HepG2 (cell line): ENCODE measurements at regions of chr5 and their contacts with region 1.

Region 1: GRCh38 chr5:55226027-55226933 is 835 bp downstream of the MCIDAS start:
- DNase-seq: peak; percentile 38
- ATAC-seq: peak; percentile 86
- H3K4me3 ChIP-seq: peak overlapping the region; percentile 39 to 74 (median 41); a peak in 4 of 6 replicates
- H3K27ac ChIP-seq: no peak overlapping the region
- H3K4me1 ChIP-seq: peaks cover 4% of the 10 kb centered on the region; the same call in 1 of the 2 replicates
- H3K27me3 ChIP-seq: peaks cover 1 to 60% of the 10 kb centered on the region in 2 experiments
- CTCF ChIP-seq: peak; percentile 92
- EP300 ChIP-seq: no peak
- POLR2A ChIP-seq: no peak
- RAD21 ChIP-seq: peak; percentile 69

Region 2: DNA sequence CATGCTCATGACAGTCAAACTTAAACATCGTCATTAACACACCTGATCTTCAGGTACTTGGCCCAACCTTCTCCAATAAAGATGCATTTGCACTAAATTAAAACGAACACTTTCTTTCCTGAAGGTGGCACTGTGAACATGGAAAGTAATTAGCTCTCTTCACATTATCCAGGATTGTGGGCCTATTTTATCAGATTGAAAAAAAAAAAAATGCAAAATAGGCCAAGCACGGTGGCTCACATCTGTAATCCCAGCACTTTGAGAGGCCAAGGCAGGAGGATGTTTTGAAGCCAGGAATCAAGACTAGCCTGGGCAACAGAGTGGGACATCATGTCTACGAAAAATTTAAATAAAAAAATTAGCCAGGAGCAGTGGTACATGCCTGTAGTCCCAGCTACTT is 38.9 kb before region 1 on chr5:
- CTCF ChIA-PET with region 1: no interaction called
- POLR2A ChIA-PET with region 1: no interaction called
- in situ Hi-C with region 1: no loop called
- intact Hi-C with region 1: loop called (anchors 5 kb)
- DNase-seq: no peak
- ATAC-seq: no peak
- H3K4me3 ChIP-seq: no peak overlapping the region
- H3K27ac ChIP-seq: no peak overlapping the region
- H3K4me1 ChIP-seq: peaks cover 12% of the 10 kb centered on the region
- H3K27me3 ChIP-seq: peaks cover 0 to 10% of the 10 kb centered on the region in 2 experiments; a peak in 2 of 5 replicates
- CTCF ChIP-seq: 0 out of 2 replicates have a peak, but pooled peaks have one; percentile 29
- EP300 ChIP-seq: no peak
- POLR2A ChIP-seq: no peak
- RAD21 ChIP-seq: no peak